ENCODE measurements at regions of chr1 and their contacts with region 1.

Region 1: DNA sequence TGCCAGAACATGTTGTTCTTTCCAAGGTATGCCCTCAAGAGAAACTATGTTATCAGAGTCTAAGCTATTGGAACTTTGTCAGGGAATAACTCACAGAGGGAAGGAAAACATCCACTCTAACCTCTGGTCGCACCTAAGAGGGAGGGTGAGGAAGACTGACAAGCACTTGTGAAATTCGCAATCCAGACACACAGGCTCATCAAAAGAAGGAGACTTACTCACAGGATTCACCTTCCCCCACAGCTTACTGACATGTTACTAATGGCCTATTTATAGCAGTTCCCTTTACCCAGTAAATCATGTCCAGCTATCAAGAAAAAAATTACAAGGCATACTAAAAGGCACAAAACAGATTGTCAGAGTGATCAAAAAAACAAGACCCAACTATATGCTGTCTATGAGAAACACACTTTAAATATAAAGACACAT is 36.9 kb downstream of the WDR64 start:
- DNase-seq: no peak
- ATAC-seq: no peak
- H3K4me3 Mint-ChIP-seq: no peak overlapping the region
- H3K27ac Mint-ChIP-seq: no peak overlapping the region
- H3K4me1 Mint-ChIP-seq: no peaks in the 10 kb centered on the region
- H3K27me3 Mint-ChIP-seq: peaks cover 21% of the 10 kb centered on the region
- CTCF ChIP-seq: no peak

Region 2: GRCh38 chr1:240611619-240612480 is 1077.1 kb before region 1 on chr1 and contains the start of gene GREM2:
- CTCF ChIA-PET with region 1: no interaction called
- POLR2A ChIA-PET with region 1: no interaction called
- intact Hi-C with region 1: no loop called
- DNase-seq: no peak
- ATAC-seq: no peak
- H3K4me3 Mint-ChIP-seq: peak within 1 kb of the TSS; percentile 80
- H3K27ac Mint-ChIP-seq: no peak within 1 kb of the TSS
- H3K4me1 Mint-ChIP-seq: peaks cover 14% of the 10 kb centered on the region
- H3K27me3 Mint-ChIP-seq: peaks cover 26% of the 10 kb centered on the region
- CTCF ChIP-seq: no peak
- total RNA-seq, gene GREM2: not detected in 2 replicates

Region 3: DNA sequence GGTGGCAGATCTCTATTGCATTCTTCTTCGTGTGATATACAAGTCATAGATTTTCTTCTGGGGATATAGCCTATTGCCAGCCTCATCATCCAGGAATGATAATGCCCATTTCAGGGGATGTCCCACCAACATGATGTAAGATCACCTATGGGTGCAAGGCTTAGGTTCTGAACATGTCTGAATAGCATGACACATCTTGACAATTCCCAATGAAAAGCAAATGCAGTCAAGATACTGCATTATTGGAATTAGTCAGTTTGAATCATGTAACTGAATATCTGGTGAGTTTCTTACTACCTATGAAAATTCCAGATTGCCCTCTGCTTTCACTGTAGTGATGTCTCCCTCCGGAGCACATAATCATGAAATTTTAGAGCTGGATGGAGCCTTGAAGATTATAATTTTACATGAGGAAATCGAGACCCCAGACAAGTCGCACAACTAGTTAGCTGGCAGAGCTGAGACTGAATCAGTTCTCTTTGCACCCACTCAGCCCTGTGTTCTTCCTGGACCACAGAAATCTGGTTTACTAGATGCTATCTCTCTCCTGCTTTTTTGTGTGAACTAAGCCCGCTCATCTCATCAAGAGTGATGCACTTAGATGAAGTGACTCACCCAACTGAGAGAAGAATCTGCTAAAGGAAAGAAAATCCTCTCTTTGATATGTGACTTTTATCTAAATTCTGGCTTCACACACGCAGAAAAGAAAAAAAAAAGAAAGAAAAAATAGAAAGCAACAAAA is 28.1 kb after region 1 on chr1:
- CTCF ChIA-PET with region 1: no interaction called
- POLR2A ChIA-PET with region 1: no interaction called
- intact Hi-C with region 1: no loop called
- DNase-seq: no peak
- ATAC-seq: no peak
- H3K4me3 Mint-ChIP-seq: no peak overlapping the region
- H3K27ac Mint-ChIP-seq: no peak overlapping the region
- H3K4me1 Mint-ChIP-seq: peaks cover 2% of the 10 kb centered on the region
- H3K27me3 Mint-ChIP-seq: peaks cover 13% of the 10 kb centered on the region
- CTCF ChIP-seq: no peak

Region 4: GRCh38 chr1:242546849-242547729 is 858.1 kb after region 1 on chr1:
- CTCF ChIA-PET with region 1: no interaction called
- POLR2A ChIA-PET with region 1: interaction called, 10 read pairs
- intact Hi-C with region 1: no loop called
- DNase-seq: no peak
- ATAC-seq: no peak
- H3K4me3 Mint-ChIP-seq: no peak overlapping the region
- H3K27ac Mint-ChIP-seq: no peak overlapping the region
- H3K4me1 Mint-ChIP-seq: no peaks in the 10 kb centered on the region
- H3K27me3 Mint-ChIP-seq: peaks cover 7% of the 10 kb centered on the region
- CTCF ChIP-seq: no peak

Measured in activated B cell treated with CpG ODN at 0.5 μM for 24 hours (primary cell).